Endothelial cell of umbilical vein (primary cell): ENCODE measurements at regions of chr17 and their contacts with region 1.

Region 1: DNA sequence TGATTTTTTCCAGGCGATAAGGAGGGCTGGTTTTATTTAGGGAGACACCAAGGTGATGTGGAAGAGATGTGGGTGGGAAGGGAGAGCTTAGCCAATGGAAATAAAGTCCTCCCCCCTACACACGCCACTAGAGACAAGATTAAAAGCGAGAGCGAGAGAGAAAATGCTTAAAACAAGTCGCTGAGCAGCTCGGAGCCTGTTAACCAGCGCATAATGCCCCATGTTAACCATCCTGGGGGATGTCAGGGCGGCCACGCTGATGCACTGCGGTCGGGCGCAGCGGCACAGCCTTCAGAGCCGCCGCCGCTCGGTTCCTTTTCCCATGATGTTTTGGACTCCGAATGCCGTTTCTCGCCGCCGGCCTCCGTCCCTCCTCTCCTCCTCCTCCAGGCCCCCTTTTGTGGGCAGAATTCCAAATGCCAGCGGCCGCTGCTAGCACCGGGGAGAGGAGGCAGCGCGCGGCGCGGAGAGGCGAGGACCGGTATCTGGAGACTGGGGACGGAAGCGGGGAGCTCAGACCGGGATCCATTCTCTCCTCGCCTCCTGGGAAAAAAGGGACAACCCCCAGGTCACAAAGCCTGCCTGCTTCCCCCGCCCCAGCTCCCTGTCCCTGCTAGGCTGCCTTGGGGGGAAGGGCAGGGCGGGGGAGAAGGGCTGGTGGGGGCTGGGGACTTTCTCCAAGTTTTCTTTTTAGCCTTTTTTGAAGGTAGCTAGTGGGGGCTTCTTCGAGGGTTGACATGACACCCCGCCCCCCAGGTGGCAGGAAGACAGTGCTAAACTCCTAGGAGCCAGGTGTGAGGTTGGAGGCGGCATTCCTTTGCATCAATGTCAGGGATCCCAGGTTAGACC is 98.1 kb upstream of the CCL2 start:
- DNase-seq: no peak
- H3K4me3 ChIP-seq: no peak overlapping the region
- H3K27ac ChIP-seq: no peak overlapping the region
- H3K4me1 ChIP-seq: no peaks in the 10 kb centered on the region
- H3K27me3 ChIP-seq: peaks cover 29 to 32% of the 10 kb centered on the region in 2 experiments
- CTCF ChIP-seq: no peak
- POLR2A ChIP-seq: no peak

Region 2: GRCh38 chr17:34171245-34171818 is 14.4 kb after region 1 on chr17:
- CTCF ChIA-PET with region 1: interaction called, 20 read pairs
- POLR2A ChIA-PET with region 1: no interaction called
- dilution Hi-C with region 1: no loop called
- intact Hi-C with region 1: no loop called
- DNase-seq: peak; percentile 73
- H3K4me3 ChIP-seq: no peak overlapping the region
- H3K27ac ChIP-seq: no peak overlapping the region
- H3K4me1 ChIP-seq: no peaks in the 10 kb centered on the region
- H3K27me3 ChIP-seq: peaks cover 12 to 19% of the 10 kb centered on the region in 2 experiments
- CTCF ChIP-seq: peak; percentile 87 to 91
- POLR2A ChIP-seq: no peak

Region 3: DNA sequence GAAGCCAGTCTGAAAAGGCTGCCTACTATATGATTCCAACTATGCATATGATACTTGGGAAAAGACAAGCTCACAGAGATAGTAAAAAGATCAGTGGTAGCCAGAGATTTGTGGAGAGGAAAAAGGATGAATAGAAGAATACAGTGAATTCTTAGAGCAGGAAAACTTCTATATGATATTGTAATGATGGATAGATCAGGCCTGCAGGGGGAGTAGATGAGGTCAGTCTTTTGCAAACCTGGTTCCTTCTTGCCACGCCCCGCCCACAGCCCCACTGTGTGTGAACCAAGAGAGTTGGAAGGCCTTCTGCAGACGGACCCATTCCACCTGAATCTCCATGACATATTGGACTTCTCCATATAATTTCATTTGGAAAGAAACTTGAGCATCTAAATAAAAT is 161.5 kb after region 1 on chr17:
- CTCF ChIA-PET with region 1: no interaction called
- POLR2A ChIA-PET with region 1: no interaction called
- dilution Hi-C with region 1: no loop called
- intact Hi-C with region 1: no loop called
- DNase-seq: no peak
- H3K4me3 ChIP-seq: no peak overlapping the region
- H3K27ac ChIP-seq: no peak overlapping the region
- H3K4me1 ChIP-seq: no peaks in the 10 kb centered on the region
- H3K27me3 ChIP-seq: peaks cover 8 to 15% of the 10 kb centered on the region in 2 experiments
- CTCF ChIP-seq: no peak
- POLR2A ChIP-seq: no peak